ENCODE measurements at regions of chrX and their contacts with region 1.

Region 1: GRCh38 chrX:24259544-24260240 is 54.2 kb downstream of the SUPT20HL2 start:
- DNase-seq: peak; percentile 52
- H3K4me3 Mint-ChIP-seq: no peak overlapping the region
- H3K27ac Mint-ChIP-seq: no peak overlapping the region
- H3K4me1 Mint-ChIP-seq: peaks cover 14% of the 10 kb centered on the region
- H3K27me3 Mint-ChIP-seq: no peaks in the 10 kb centered on the region

Region 2: GRCh38 chrX:24285082-24285481 is 25.4 kb after region 1 on chrX:
- CTCF ChIA-PET with region 1: interaction called, 13 read pairs
- intact Hi-C with region 1: loop called (anchors 1 kb)
- DNase-seq: no peak
- H3K4me3 Mint-ChIP-seq: no peak overlapping the region
- H3K27ac Mint-ChIP-seq: no peak overlapping the region
- H3K4me1 Mint-ChIP-seq: peaks cover 3% of the 10 kb centered on the region
- H3K27me3 Mint-ChIP-seq: no peaks in the 10 kb centered on the region

Region 3: DNA sequence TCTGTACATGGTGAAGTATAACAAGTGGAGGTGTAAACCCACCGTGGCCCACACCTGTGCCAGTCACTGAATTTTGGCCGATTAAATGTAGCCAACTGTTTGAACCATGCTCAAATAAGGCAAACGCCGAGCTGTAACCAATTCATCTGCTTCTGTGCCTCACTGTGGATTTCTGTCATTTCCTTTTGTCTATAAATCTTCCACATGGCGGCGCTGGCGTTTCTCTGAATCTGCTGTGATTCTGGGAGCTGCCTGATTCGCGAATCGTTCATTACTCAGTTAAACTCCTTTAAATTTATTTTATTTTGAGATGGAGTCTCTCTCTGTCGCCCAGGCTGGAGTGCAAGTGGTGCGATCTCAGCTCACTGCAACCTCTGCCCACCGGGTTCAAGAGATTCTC is 34.9 kb after region 1 on chrX:
- CTCF ChIA-PET with region 1: interaction called, 3 read pairs
- intact Hi-C with region 1: loop called (anchors 2 kb)
- DNase-seq: peak; percentile 67
- H3K4me3 Mint-ChIP-seq: no peak overlapping the region
- H3K27ac Mint-ChIP-seq: no peak overlapping the region
- H3K4me1 Mint-ChIP-seq: no peaks in the 10 kb centered on the region
- H3K27me3 Mint-ChIP-seq: no peaks in the 10 kb centered on the region

Region 4: DNA sequence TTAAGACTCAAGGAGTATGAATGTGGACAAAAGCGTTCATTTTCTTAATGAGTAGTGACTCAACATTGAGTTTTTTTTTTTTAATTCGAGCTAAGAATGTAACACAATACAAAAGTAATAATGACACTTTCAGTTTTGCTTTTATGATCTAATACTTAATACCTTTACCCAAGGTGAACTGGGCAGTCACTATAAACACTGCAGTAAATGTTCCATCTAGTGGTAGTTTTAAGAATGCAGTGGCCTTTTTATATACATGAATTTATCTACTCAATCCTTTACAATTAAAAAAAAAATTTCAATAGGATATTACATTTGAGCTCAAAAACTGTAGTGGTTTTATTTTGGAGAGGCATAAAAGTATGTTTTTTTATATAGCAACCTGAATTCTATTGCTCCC is 239.3 kb after region 1 on chrX:
- CTCF ChIA-PET with region 1: no interaction called
- intact Hi-C with region 1: loop called (anchors 5 kb)
- DNase-seq: no peak
- H3K4me3 Mint-ChIP-seq: no peak overlapping the region
- H3K27ac Mint-ChIP-seq: no peak overlapping the region
- H3K4me1 Mint-ChIP-seq: peaks cover 24% of the 10 kb centered on the region
- H3K27me3 Mint-ChIP-seq: no peaks in the 10 kb centered on the region

Region 5: GRCh38 chrX:24561121-24561520 is 301.4 kb after region 1 on chrX:
- CTCF ChIA-PET with region 1: no interaction called
- intact Hi-C with region 1: loop called (anchors 1 kb)
- DNase-seq: no peak
- H3K4me3 Mint-ChIP-seq: no peak overlapping the region
- H3K27ac Mint-ChIP-seq: no peak overlapping the region
- H3K4me1 Mint-ChIP-seq: no peaks in the 10 kb centered on the region
- H3K27me3 Mint-ChIP-seq: no peaks in the 10 kb centered on the region

Measured in activated naive CD4-positive, alpha-beta T cell treated with anti-CD3 and anti-CD28 coated beads for 36 hours (primary cell).